CD14-positive monocyte (primary cell): ENCODE measurements at regions of chr10 and their contacts with region 1.

Region 1: GRCh38 chr10:22436884-22437619 is 91.8 kb downstream of the SPAG6 start:
- DNase-seq: peak; percentile 87 to 88 (median 87)
- H3K4me3 ChIP-seq: peak overlapping the region; percentile 56 to 84 (median 78)
- H3K4me3 Mint-ChIP-seq: peak overlapping the region; percentile 96 to 97
- H3K27ac ChIP-seq: peak overlapping the region; percentile 87 to 93
- H3K27ac Mint-ChIP-seq: peak overlapping the region; percentile 91 to 97 (median 94)
- H3K4me1 ChIP-seq: peaks cover 28 to 46% of the 10 kb centered on the region in 2 donors
- H3K4me1 Mint-ChIP-seq: peaks cover 37% of the 10 kb centered on the region
- H3K27me3 ChIP-seq: peaks cover 10 to 35% of the 10 kb centered on the region in 2 donors
- H3K27me3 Mint-ChIP-seq: peaks cover 19 to 46% (median 24%) of the 10 kb centered on the region in 3 donors
- CTCF ChIP-seq: no peak

Region 2: GRCh38 chr10:22228943-22229801 is 207.9 kb before region 1 on chr10:
- intact Hi-C with region 1: loop called in 1 of 2 experiments (anchors 10 kb)
- DNase-seq: peak; percentile 82 to 86 (median 84)
- H3K4me3 ChIP-seq: peak overlapping the region; percentile 81
- H3K4me3 Mint-ChIP-seq: peak overlapping the region; percentile 87 to 90
- H3K27ac ChIP-seq: peak overlapping the region; percentile 74 to 81
- H3K27ac Mint-ChIP-seq: peak overlapping the region; percentile 79 to 94 (median 89)
- H3K4me1 ChIP-seq: peaks cover 16 to 22% of the 10 kb centered on the region in 2 donors
- H3K4me1 Mint-ChIP-seq: peaks cover 22% of the 10 kb centered on the region
- H3K27me3 ChIP-seq: peaks cover 0 to 2% of the 10 kb centered on the region in 2 donors
- H3K27me3 Mint-ChIP-seq: peaks cover under 1 to 8% (median 7%) of the 10 kb centered on the region in 3 donors
- CTCF ChIP-seq: no peak

Region 3: GRCh38 chr10:22316285-22317120 is 120.5 kb before region 1 on chr10 and contains the start of gene COMMD3:
- intact Hi-C with region 1: loop called in 1 of 2 experiments (anchors 5 kb)
- DNase-seq: peak; percentile 82 to 85 (median 82)
- H3K4me3 ChIP-seq: peak within 1 kb of the TSS; percentile 78 to 97 (median 91)
- H3K4me3 Mint-ChIP-seq: peak within 1 kb of the TSS; percentile 88 to 99
- H3K27ac ChIP-seq: peak within 1 kb of the TSS; percentile 89 to 91
- H3K27ac Mint-ChIP-seq: peak within 1 kb of the TSS; percentile 93 to 97 (median 95)
- H3K4me1 ChIP-seq: peaks cover 28 to 45% of the 10 kb centered on the region in 2 donors
- H3K4me1 Mint-ChIP-seq: peaks cover 29% of the 10 kb centered on the region
- H3K27me3 ChIP-seq: peaks cover 0 to 9% of the 10 kb centered on the region in 2 donors
- H3K27me3 Mint-ChIP-seq: peaks cover 0 to 12% (median 2%) of the 10 kb centered on the region in 3 donors
- CTCF ChIP-seq: no peak
- polyA plus RNA-seq, gene COMMD3: 44.9 to 140 (median 138) TPM

Region 4: DNA sequence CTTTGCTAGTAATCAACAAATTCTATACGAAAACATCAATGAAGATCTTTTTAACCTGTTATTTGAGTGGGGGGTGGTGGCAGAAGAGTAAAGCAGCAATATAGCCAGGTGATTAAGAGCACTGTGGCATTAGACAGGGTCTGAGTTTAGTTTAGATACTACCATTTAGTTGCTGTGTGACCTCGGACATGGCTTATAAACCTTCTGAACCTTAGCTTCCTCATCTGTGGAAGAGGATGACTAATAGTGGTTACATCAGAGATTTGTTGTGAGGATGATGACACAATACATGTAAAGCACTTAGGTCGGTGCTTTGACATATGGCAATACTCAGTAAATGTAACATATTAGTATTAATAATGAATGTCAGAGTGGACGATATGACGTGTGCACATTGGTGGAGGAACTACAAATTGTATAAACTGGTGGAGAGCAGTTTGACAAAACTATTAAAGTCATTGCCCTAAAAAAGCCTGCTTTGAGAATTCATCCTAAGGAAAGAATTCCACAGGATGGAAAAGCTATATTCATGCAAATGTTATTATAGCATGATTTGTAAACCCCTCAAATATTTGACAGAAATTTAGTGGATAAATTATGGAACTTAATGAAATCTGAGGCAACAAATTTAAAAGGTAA is 67.5 kb before region 1 on chr10:
- intact Hi-C with region 1: loop called (anchors 10 kb)
- DNase-seq: peak; percentile 88 to 97 (median 96)
- H3K4me3 ChIP-seq: no peak overlapping the region
- H3K4me3 Mint-ChIP-seq: no peak overlapping the region
- H3K27ac ChIP-seq: peak overlapping the region in 1 of 2 donors; percentile 71
- H3K27ac Mint-ChIP-seq: peak overlapping the region; percentile 54 to 92 (median 89)
- H3K4me1 ChIP-seq: peaks cover 14 to 19% of the 10 kb centered on the region in 2 donors
- H3K4me1 Mint-ChIP-seq: peaks cover 23% of the 10 kb centered on the region
- H3K27me3 ChIP-seq: no peaks in the 10 kb centered on the region
- H3K27me3 Mint-ChIP-seq: peaks cover 0 to 2% (median 0%) of the 10 kb centered on the region in 3 donors
- CTCF ChIP-seq: no peak

Region 5: GRCh38 chr10:22491931-22492615 is 55.0 kb after region 1 on chr10:
- intact Hi-C with region 1: no loop called
- DNase-seq: no peak
- H3K4me3 ChIP-seq: no peak overlapping the region
- H3K4me3 Mint-ChIP-seq: no peak overlapping the region
- H3K27ac ChIP-seq: no peak overlapping the region
- H3K27ac Mint-ChIP-seq: no peak overlapping the region
- H3K4me1 ChIP-seq: no peaks in the 10 kb centered on the region
- H3K4me1 Mint-ChIP-seq: peaks cover 12% of the 10 kb centered on the region
- H3K27me3 ChIP-seq: no peaks in the 10 kb centered on the region
- H3K27me3 Mint-ChIP-seq: peaks cover 1 to 4% (median 3%) of the 10 kb centered on the region in 3 donors
- CTCF ChIP-seq: no peak

Region 6: GRCh38 chr10:22518167-22518724 is 81.2 kb after region 1 on chr10:
- intact Hi-C with region 1: no loop called
- DNase-seq: no peak
- H3K4me3 ChIP-seq: no peak overlapping the region
- H3K4me3 Mint-ChIP-seq: no peak overlapping the region
- H3K27ac ChIP-seq: no peak overlapping the region
- H3K27ac Mint-ChIP-seq: no peak overlapping the region
- H3K4me1 ChIP-seq: no peaks in the 10 kb centered on the region
- H3K4me1 Mint-ChIP-seq: no peaks in the 10 kb centered on the region
- H3K27me3 ChIP-seq: no peaks in the 10 kb centered on the region
- H3K27me3 Mint-ChIP-seq: peaks cover 2 to 5% (median 3%) of the 10 kb centered on the region in 3 donors
- CTCF ChIP-seq: no peak

Region 7: DNA sequence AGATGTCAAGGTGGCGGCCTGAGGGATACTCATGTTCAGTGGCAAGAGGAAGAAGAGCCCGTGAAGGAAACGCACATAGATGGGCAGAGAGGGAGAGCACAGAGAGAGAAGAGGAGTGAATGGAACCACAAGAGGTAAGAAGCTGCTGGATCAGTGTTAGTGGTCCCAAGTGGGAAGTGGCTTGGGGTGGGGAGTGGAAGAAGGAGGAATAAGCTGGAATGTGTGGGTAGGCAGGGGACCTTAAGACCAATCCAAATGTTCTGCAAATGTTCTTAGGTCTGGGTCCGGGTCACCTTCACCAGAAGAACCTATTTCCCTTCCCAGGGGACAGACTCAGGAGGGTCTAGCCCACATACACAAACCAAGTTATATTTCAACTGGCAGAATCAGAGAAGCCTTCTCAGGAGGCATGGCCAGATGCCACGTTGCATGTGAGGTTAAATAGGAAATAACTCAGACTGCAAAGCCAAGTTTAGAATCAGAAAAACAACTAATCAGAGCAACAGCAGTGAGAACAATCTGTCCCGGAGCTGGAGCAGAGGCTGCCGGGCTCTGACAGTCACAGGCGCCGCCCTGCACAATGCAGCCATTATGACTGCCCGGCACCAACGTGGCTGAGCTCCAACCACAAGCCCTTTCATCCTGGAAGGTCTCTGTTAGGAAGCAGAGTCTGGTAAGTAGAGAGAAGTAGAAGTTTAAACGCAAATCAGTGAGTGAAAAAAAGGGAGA is 412.2 kb after region 1 on chr10:
- intact Hi-C with region 1: no loop called
- DNase-seq: no peak
- H3K4me3 ChIP-seq: no peak overlapping the region
- H3K4me3 Mint-ChIP-seq: peak overlapping the region in 1 of 2 donors; percentile 78
- H3K27ac ChIP-seq: no peak overlapping the region
- H3K27ac Mint-ChIP-seq: peak overlapping the region in 1 of 7 donors; percentile 55
- H3K4me1 ChIP-seq: no peaks in the 10 kb centered on the region
- H3K4me1 Mint-ChIP-seq: peaks cover 8% of the 10 kb centered on the region
- H3K27me3 ChIP-seq: no peaks in the 10 kb centered on the region
- H3K27me3 Mint-ChIP-seq: peaks cover 0 to 7% (median 0%) of the 10 kb centered on the region in 3 donors
- CTCF ChIP-seq: no peak